ENCODE measurements at regions of chr1 and their contacts with region 1.

Region 1: GRCh38 chr1:180168786-180169639 is 14.3 kb downstream of the QSOX1 start:
- DNase-seq: no peak
- H3K4me3 ChIP-seq: no peak overlapping the region
- H3K27me3 ChIP-seq: no peaks in the 10 kb centered on the region
- CTCF ChIP-seq: peak; percentile 69

Region 2: DNA sequence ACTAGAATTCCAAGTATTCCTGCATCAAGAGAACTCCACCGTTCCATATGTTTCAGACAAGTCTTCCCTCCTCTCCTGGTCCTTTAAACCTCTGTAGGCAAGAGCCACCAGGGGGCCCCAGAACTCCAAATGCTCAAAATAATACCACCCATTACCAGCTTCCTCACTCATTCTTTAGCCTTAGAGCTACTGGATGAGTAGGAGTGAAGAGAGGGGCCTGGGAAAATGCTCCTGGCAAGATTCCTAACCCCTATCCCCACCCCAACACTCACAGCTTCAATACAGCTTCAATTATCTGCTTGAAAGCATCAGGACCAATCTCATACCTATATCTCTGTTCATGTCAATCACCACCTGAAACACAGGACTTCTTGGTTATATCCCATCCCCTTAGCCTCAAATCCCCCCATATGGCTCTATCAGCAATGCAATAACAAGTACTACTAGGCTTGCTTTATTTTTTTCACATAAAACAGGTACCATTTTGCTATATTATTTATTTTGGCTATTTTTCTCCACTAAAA is 301.1 kb before region 1 on chr1:
- CTCF ChIA-PET with region 1: interaction called, 18 read pairs
- POLR2A ChIA-PET with region 1: no interaction called
- DNase-seq: no peak
- H3K4me3 ChIP-seq: no peak overlapping the region
- H3K27me3 ChIP-seq: no peaks in the 10 kb centered on the region
- CTCF ChIP-seq: peak; percentile 87

Region 3: DNA sequence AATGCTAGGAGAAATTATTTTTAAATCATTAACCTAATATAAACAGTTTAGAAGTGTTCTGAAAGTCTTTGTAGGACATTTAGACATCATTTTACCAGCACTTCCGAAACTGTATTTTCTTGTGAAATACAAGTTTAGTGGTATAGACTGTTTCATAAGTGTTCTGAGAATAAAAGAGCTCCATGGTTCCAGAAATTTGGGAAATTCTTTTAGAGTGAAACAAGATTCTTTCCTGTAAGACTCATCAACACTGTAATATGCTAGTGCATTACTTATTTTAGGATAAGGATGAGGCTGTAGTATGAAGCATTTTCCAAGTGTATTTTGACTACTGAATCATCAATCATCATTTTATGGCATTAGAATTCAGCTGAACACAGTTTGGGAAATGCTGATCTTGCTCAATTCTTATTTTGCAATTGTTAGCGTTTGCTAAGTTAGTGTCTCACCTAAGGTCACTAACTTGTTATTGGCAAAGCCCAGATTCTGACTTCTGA is 141.0 kb before region 1 on chr1:
- CTCF ChIA-PET with region 1: no interaction called
- POLR2A ChIA-PET with region 1: no interaction called
- DNase-seq: peak; percentile 85
- H3K4me3 ChIP-seq: no peak overlapping the region
- H3K27me3 ChIP-seq: no peaks in the 10 kb centered on the region
- CTCF ChIP-seq: no peak

Region 4: DNA sequence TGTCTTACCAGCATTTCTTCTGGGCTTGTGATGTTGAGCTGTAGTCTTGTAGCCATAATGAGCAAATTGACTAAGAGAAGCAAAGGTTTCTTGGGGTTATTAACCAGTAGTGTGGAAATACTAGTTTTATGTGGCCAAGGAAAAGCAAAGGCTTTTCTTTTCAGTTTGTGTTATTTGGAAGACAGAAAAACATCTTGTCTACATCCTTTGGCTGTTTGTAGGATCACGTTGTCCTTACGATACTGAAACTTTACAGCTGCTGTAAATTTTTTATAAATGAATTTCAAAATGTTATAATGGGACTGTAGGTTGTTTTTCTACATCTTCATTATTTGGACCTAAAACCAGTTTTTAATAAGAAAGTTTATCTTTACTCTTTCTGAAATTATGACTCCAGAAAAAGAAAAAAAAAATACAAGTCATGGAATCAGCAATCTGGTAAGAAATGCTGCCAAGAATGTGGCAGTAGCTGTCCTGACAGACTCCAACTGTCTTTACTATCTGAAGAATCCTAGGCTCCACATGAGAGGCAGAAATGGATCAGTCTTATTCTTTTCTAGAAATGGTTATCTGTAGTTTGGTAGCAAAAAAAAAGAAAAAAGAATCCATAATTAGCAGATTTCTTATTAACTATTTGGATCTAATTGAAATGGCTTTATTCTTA is 55.9 kb before region 1 on chr1:
- CTCF ChIA-PET with region 1: no interaction called
- POLR2A ChIA-PET with region 1: no interaction called
- DNase-seq: no peak
- H3K4me3 ChIP-seq: no peak overlapping the region
- H3K27me3 ChIP-seq: no peaks in the 10 kb centered on the region
- CTCF ChIP-seq: no peak

Region 5: GRCh38 chr1:180157108-180157507 is 11.9 kb before region 1 on chr1:
- CTCF ChIA-PET with region 1: interaction called, 16 read pairs
- POLR2A ChIA-PET with region 1: no interaction called
- DNase-seq: no peak
- H3K4me3 ChIP-seq: no peak overlapping the region
- H3K27me3 ChIP-seq: no peaks in the 10 kb centered on the region
- CTCF ChIP-seq: no peak